GM10248 (cell line): ENCODE measurements at regions of chr1 and their contacts with region 1.

Region 1: GRCh38 chr1:36223993-36224536 is at the start of gene THRAP3:
- DNase-seq: peak; percentile 97
- CTCF ChIP-seq: no peak

Region 2: GRCh38 chr1:36149237-36149972 is 74.7 kb before region 1 on chr1 and contains the start of gene TRAPPC3:
- CTCF ChIA-PET with region 1: interaction called, 43 read pairs
- POLR2A ChIA-PET with region 1: interaction called, 15 read pairs
- DNase-seq: peak; percentile 98
- CTCF ChIP-seq: peak; percentile 99

Region 3: DNA sequence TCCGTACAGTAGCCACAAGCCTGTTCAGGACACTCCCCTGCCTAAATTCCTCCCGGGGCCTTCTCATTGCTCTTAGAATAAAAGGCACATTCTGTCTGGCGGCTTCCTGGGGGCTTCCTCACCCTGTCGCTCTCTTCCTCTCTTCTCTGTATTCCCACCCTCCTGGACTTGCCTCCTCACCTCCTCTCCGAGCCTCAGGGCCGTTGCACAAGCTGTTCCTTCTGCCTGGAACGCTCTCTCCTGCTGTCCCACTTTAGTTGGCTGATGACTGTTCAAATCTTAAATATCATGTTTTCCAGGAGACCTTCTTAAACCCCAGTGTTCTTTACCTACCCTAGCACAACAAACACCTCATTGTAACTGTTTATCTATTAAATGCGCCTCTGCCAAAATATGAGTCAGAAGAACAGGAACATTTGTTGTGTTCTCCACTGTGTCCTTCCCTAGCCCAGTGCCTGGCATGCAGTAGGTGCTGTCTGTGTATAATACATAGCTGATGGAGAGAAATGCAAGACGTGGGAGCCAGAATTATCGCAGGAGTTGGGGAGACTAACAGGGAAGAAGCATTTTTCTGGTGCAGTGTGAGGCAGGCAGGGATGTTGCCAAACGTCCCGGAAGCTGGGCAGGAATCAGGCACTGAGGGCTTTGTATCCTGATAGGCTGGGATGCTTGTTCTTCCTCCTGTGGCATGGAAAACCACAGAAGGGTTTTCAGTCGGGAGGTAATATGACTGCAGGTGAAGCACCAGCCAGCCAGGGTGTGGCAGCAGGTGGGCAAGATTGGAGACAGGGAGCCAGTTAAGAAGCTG is 23.9 kb before region 1 on chr1:
- CTCF ChIA-PET with region 1: no interaction called
- POLR2A ChIA-PET with region 1: no interaction called
- DNase-seq: no peak
- CTCF ChIP-seq: no peak

Region 4: GRCh38 chr1:36239941-36240637 is 16.0 kb after region 1 on chr1:
- CTCF ChIA-PET with region 1: interaction called, 10 read pairs
- POLR2A ChIA-PET with region 1: interaction called, 12 read pairs
- DNase-seq: no peak
- CTCF ChIP-seq: no peak

Region 5: DNA sequence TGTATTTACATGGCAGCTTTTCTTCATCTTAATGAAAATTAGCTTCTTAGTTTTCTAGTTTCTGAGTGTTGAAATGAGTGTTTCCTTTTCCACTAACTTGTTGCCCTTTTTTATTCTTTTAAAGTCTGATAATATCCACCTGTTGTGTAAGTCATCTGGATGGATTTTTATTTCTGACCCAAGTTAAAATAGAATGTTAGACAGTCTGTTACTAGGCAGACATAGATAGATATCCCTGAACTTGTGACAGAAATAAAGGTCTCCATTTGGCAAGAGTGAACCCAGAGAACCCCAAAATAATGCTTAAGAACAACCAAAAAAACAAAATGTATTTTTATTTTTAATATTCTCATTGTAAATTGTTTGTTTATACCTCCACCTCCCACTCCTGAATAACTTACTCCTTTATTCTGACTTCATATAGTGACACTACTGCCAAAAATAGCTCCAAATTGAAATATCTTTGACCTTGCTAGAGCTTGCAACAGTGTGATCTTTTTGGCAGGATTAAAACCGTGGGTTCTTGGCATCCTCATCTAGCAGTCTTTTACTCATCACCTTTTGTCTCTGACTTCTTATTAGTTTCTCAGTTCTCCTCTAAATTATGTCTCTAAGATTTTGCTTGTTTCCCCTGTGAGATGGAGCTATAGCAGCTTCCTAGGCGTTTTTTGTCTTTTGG is 55.2 kb after region 1 on chr1:
- CTCF ChIA-PET with region 1: no interaction called
- POLR2A ChIA-PET with region 1: no interaction called
- DNase-seq: no peak
- CTCF ChIP-seq: no peak